ENCODE measurements at regions of chr10 and their contacts with region 1.

Region 1: DNA sequence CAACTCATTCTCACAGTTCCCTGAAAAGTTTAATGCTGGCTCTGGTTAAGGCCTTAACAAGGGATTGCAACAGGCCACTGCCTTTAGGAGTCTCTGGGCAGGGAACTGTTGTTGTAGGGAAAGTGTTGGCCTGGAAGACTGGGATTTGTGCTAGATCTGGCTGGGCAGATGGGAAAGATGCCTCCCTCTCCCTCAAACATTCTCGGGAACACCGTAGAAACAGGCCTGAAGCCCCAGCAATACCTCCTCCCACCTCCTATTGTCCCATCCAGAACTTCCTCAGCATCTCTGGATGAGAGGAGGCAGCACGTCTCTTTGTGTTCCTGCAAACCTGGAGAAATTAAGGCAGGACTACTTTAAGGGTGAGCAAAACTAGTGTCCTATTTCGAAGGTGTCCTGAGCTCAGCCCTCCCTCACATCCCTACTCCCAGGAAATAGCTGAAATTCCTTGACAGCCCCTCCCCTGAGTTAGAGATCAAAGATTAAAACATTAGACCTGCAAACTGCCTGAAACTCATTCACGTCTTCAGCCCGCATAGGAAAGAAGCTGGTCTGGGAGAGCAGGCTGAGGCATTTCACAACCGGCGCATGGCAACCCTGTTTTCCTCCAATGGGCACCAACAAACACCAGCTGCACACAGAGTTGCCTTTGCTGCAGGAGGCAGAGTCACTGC is 10.9 kb upstream of the MAP3K8 start:
- H3K4me3 ChIP-seq: no peak overlapping the region
- H3K27ac ChIP-seq: no peak overlapping the region
- H3K4me1 ChIP-seq: no peaks in the 10 kb centered on the region
- CTCF ChIP-seq: no peak

Region 2: DNA sequence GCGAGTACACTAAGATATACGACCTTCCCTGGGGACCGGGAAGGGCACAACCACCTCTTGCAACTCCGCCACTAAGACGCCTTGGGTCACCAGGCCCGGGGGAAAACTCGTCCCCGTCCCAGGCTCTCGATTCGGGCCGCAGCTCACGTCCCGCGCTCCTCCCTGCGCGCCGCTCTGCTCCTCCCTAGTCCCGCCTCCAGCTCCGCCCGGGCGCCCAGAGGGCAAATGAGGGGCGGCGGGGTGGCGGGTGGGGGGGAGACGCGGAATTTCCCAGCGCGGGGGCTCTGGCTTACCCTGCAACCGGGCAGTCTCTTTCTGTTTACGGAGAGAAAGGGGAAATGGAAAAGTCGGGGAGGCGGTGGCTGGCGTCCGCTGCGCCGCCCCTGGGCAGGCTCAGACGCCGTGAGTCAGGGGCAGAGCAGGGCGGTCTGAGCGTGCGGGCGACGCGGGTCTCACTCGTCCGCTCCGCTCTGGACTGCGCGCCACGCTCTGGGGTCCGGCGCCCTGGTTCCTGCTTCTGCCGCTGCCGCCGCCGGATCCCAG is 10.7 kb after region 1 on chr10 and contains the start of gene MAP3K8:
- CTCF ChIA-PET with region 1: no interaction called
- POLR2A ChIA-PET with region 1: interaction called, 13 read pairs
- H3K4me3 ChIP-seq: peak within 1 kb of the TSS; percentile 67
- H3K27ac ChIP-seq: peak within 1 kb of the TSS; percentile 86
- H3K4me1 ChIP-seq: peaks cover 36% of the 10 kb centered on the region
- CTCF ChIP-seq: no peak

Measured in HEK293 (cell line).